Panc1 (cell line): ENCODE measurements at regions of chr4 and their contacts with region 1.

Region 1: DNA sequence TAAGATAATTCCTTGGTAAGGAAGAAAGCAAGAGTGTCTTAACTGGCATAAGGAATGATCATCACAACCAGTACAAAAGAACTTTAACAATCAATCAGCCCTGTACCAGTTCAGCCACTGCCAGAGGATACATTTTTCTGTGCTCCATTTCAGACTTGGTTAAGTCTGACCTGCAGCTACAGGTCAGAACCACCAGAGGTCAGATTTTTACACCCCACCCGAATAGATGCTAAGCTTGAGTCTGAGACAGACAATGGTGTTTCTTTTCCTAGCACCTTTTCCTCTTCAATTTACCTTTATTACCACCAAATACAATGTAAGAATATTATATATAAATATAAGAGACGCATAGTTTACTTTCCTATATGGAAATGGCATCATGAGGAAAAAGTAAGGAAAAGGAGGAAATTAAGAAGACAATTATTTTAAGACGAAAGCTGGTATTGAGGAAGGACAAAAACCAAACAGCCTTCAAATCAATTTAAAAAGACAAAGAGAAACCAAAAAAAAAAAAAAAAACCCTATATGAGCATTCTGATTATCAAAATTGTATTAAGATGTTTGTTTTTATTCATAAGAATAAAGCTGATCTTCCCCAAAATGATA is 215.3 kb upstream of the TTC29 start:
- DNase-seq: peak; percentile 20
- ATAC-seq: peak; percentile 69; the same call in 1 of the 2 replicates
- H3K4me3 ChIP-seq: no peak overlapping the region
- H3K27ac ChIP-seq: no peak overlapping the region
- H3K4me1 ChIP-seq: no peaks in the 10 kb centered on the region
- H3K27me3 ChIP-seq: peaks cover 5% of the 10 kb centered on the region; the same call in 1 of the 2 replicates
- CTCF ChIP-seq: peak; percentile 76

Region 2: DNA sequence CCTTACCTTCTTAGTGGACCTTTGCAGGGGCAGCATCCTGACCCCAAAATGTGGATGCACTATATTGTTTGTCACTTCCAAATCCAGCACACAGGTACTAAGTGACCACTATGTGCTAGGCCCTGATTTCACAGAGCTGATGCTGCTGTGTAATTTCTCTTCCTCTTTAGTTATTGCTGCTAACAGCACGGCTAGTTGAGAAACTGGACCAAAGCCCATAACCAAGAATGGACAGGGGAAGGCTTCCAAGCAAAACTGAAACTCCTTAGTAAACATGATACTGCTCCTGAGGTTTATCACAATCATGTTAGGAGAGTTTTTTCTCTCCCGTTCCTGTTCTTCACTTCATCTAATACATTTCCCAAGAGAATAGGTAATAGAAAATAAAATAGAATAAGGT is 42.5 kb before region 1 on chr4:
- CTCF ChIA-PET with region 1: no interaction called
- POLR2A ChIA-PET with region 1: no interaction called
- in situ Hi-C with region 1: no loop called
- intact Hi-C with region 1: no loop called
- DNase-seq: no peak
- ATAC-seq: no peak
- H3K4me3 ChIP-seq: no peak overlapping the region
- H3K27ac ChIP-seq: no peak overlapping the region
- H3K4me1 ChIP-seq: no peaks in the 10 kb centered on the region
- H3K27me3 ChIP-seq: no peaks in the 10 kb centered on the region
- CTCF ChIP-seq: no peak

Region 3: GRCh38 chr4:147173797-147174432 is 12.9 kb after region 1 on chr4:
- CTCF ChIA-PET with region 1: no interaction called
- POLR2A ChIA-PET with region 1: interaction called, 11 read pairs
- in situ Hi-C with region 1: no loop called
- intact Hi-C with region 1: no loop called
- DNase-seq: no peak
- ATAC-seq: no peak
- H3K4me3 ChIP-seq: no peak overlapping the region
- H3K27ac ChIP-seq: no peak overlapping the region
- H3K4me1 ChIP-seq: no peaks in the 10 kb centered on the region
- H3K27me3 ChIP-seq: no peaks in the 10 kb centered on the region
- CTCF ChIP-seq: no peak

Region 4: GRCh38 chr4:147207911-147208310 is 46.9 kb after region 1 on chr4:
- CTCF ChIA-PET with region 1: no interaction called
- POLR2A ChIA-PET with region 1: no interaction called
- in situ Hi-C with region 1: no loop called
- intact Hi-C with region 1: no loop called
- DNase-seq: no peak
- ATAC-seq: no peak
- H3K4me3 ChIP-seq: no peak overlapping the region
- H3K27ac ChIP-seq: no peak overlapping the region
- H3K4me1 ChIP-seq: no peaks in the 10 kb centered on the region
- H3K27me3 ChIP-seq: no peaks in the 10 kb centered on the region
- CTCF ChIP-seq: no peak